Mammary epithelial cell (primary cell): ENCODE measurements at regions of chr14 and their contacts with region 1.

Region 1: GRCh38 chr14:32826404-32827082 is 112.1 kb upstream of the NPAS3 start:
- DNase-seq: no peak
- H3K4me3 ChIP-seq: no peak overlapping the region
- H3K27ac ChIP-seq: no peak overlapping the region
- H3K4me1 ChIP-seq: peaks cover 13% of the 10 kb centered on the region
- H3K27me3 ChIP-seq: no peaks in the 10 kb centered on the region
- CTCF ChIP-seq: no peak

Region 2: GRCh38 chr14:32611752-32612151 is 214.8 kb before region 1 on chr14:
- CTCF ChIA-PET with region 1: no interaction called
- dilution Hi-C with region 1: no loop called
- in situ Hi-C with region 1: no loop called
- intact Hi-C with region 1: loop called (anchors 10 kb)
- DNase-seq: peak; percentile 69
- H3K4me3 ChIP-seq: no peak overlapping the region
- H3K27ac ChIP-seq: peak overlapping the region; percentile 9
- H3K4me1 ChIP-seq: peaks cover 21% of the 10 kb centered on the region
- H3K27me3 ChIP-seq: no peaks in the 10 kb centered on the region
- CTCF ChIP-seq: no peak

Region 3: DNA sequence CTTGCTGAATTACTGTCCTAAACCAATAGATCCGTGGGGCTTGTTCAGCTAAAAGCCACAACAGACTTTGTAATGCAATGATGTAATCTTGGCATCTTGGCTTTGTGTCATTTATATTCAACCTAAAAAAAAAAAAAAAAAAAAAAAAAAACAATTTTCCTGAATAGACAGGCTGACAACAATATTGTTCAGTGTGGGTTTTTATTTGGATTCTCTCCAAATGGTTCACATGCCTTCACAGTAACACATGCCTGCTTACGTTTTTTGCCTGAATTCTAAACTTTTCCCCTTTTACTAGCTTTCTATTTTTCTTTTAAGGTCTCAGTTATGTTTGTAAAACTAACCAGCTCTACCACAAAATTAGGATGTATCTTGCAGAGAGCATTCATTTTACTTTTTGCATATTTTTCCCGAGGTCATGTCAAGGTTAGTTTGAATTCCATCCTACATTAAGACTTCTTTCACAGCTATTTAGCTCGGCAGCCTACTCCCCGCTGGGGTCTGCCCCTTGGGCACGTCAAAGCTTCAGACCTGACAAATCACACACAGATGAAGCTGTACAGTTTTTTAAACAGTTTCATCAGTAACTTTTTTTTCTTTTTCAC is 101.6 kb before region 1 on chr14:
- CTCF ChIA-PET with region 1: no interaction called
- dilution Hi-C with region 1: no loop called
- in situ Hi-C with region 1: loop called in 1 of 2 experiments (anchors 25 kb)
- intact Hi-C with region 1: no loop called
- DNase-seq: peak; percentile 40
- H3K4me3 ChIP-seq: no peak overlapping the region
- H3K27ac ChIP-seq: no peak overlapping the region
- H3K4me1 ChIP-seq: peaks cover 6% of the 10 kb centered on the region
- H3K27me3 ChIP-seq: no peaks in the 10 kb centered on the region
- CTCF ChIP-seq: no peak